Activated B cell treated with CpG ODN at 0.5 μM for 24 hours (primary cell): ENCODE measurements at regions of chr7 and their contacts with region 1.

Region 1: DNA sequence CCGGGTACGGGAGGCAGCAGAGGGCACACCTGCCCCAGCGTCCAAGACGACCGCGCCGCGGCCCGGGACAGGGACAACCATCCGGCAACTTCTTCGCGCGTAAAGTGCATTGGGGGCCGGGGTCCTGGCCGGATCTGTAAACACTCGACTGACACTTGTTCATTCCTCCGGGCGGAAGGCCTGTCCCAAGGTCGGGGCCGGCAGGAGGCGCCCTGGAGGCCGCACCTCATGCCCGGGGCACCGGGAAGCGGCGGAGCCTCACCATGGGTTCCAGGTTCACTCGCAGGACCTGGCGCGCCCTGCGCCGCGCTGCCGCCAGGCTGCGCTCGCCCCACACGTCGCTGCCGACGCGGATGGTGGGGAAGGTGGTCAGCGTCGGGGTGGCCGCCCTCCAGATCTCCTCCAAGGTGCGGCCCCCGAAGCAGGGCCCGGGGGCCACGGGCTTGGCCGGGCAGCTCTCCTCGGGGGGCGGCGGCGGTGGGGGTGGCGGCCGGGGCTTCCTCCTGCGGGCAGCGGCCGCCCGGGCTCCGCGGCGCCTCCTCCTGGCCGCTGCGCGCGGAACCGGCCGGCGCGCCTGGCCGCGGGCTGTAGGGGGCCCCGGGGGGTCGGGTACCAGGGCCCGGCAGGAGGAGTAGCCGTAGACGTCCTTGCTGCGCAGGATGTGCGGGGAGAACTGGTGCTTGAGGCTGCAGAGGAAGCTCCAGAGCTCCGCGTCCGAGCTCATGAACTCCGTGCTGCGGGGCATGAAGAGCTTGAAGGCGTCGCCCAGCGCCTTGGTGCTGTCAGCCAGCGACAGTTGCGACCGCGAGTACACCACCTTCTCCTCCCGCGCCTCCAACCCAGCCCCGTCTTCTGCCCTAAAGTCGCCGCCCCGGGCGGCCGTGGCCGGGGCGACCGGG is 746 bp downstream of the CCDC71L start:
- DNase-seq: peak; percentile 79
- ATAC-seq: peak; percentile 52
- H3K4me3 Mint-ChIP-seq: peak overlapping the region; percentile 94
- H3K27ac Mint-ChIP-seq: peak overlapping the region; percentile 90
- H3K4me1 Mint-ChIP-seq: peaks cover 34% of the 10 kb centered on the region
- H3K27me3 Mint-ChIP-seq: no peaks in the 10 kb centered on the region
- CTCF ChIP-seq: peak; percentile 84

Region 2: DNA sequence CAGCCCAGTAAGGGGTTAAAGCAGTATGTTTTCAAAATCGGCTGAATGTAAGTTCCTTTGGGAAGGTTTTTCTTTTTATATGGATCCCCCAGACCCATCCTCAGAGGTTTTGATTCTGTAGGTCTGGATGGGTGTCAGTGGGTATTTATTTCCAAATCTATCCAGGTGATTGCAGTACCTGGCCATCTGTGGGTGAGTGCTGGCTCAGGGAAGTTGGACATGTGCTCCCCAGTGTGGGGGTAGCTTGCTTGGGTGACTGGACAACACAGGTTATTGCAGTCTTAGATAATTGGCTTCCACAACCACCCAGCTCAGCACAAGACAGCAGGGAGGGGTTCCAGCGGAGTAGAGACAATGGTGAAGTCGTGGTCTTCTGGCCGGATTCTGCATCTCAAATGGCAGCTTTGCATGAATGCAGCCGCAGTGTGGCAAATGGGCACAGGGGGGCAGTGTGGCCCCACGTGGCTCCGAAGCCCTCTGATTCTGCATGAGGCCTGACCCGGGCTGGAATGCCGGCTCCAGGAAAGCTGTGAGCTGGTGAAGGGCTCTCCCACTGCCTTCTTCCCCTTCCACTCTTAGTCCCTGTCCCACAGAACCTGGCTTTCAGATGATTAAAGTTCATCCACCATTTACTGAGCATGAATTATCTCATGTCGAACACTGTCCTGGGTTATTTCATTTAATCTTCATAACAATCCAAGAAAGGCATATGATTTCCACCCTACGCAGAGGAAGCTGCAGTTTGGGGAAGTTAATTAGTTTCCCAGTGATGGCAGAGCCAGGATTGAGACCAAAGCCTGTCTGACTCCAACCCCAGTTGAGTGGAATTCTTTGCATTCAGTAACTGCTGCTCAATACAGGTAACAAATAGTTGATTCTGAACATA is 483.6 kb before region 1 on chr7:
- CTCF ChIA-PET with region 1: interaction called, 10 read pairs
- POLR2A ChIA-PET with region 1: no interaction called
- intact Hi-C with region 1: loop called (anchors 1 kb)
- DNase-seq: peak; percentile 64
- ATAC-seq: peak; percentile 91
- H3K4me3 Mint-ChIP-seq: no peak overlapping the region
- H3K27ac Mint-ChIP-seq: no peak overlapping the region
- H3K4me1 Mint-ChIP-seq: peaks cover 11% of the 10 kb centered on the region
- H3K27me3 Mint-ChIP-seq: peaks cover 4% of the 10 kb centered on the region
- CTCF ChIP-seq: peak; percentile 41

Region 3: GRCh38 chr7:106598663-106599342 is 61.4 kb before region 1 on chr7:
- CTCF ChIA-PET with region 1: interaction called, 4 read pairs
- POLR2A ChIA-PET with region 1: interaction called, 7 read pairs
- intact Hi-C with region 1: loop called (anchors 1 kb)
- DNase-seq: peak; percentile 34
- ATAC-seq: peak; percentile 100
- H3K4me3 Mint-ChIP-seq: peak overlapping the region; percentile 52
- H3K27ac Mint-ChIP-seq: peak overlapping the region; percentile 68
- H3K4me1 Mint-ChIP-seq: peaks cover 6% of the 10 kb centered on the region
- H3K27me3 Mint-ChIP-seq: no peaks in the 10 kb centered on the region
- CTCF ChIP-seq: no peak

Region 4: DNA sequence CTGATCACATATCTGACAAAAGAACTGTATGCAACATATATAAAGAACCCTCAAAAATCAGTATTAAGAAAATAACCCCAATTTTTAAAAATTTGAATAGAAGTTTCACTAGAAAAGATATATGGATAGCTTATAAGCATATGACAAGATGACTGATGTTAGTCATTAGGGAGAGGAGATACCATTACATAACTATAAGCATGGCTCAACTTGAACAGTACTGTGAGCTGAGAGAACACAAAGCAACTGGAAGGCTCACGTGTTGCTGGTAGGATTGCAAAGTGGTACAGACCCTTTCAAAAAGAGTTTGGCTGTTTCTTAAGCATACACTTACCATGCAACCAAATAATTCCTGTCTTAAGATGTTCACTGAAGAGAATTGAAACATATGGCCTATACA is 14.0 kb before region 1 on chr7:
- CTCF ChIA-PET with region 1: no interaction called
- POLR2A ChIA-PET with region 1: no interaction called
- intact Hi-C with region 1: no loop called
- DNase-seq: no peak
- ATAC-seq: no peak
- H3K4me3 Mint-ChIP-seq: no peak overlapping the region
- H3K27ac Mint-ChIP-seq: no peak overlapping the region
- H3K4me1 Mint-ChIP-seq: peaks cover 7% of the 10 kb centered on the region
- H3K27me3 Mint-ChIP-seq: no peaks in the 10 kb centered on the region
- CTCF ChIP-seq: no peak

Region 5: DNA sequence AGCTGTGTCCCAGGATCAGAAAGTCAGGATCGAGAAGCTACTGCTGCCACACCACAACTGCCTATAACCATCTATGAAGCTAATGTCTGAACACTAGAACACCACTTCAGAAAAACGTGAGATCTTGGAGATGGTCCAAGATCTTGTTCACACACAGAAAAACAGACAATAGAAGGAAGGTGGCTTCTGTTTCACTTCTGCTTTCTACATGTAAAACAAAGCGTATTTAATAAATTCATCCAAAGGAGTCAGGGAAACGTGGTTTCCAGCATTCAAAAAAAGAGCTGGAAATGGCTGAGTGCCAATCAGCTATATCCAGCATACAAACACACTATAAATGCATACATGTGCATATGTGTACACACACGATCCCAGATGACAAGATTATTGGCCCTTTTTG is 71.0 kb after region 1 on chr7:
- CTCF ChIA-PET with region 1: interaction called, 245 read pairs
- POLR2A ChIA-PET with region 1: interaction called, 72 read pairs
- intact Hi-C with region 1: loop called (anchors 1 kb)
- DNase-seq: no peak
- ATAC-seq: peak; percentile 77
- H3K4me3 Mint-ChIP-seq: peak overlapping the region; percentile 13
- H3K27ac Mint-ChIP-seq: no peak overlapping the region
- H3K4me1 Mint-ChIP-seq: peaks cover 31% of the 10 kb centered on the region
- H3K27me3 Mint-ChIP-seq: no peaks in the 10 kb centered on the region
- CTCF ChIP-seq: no peak

Region 6: GRCh38 chr7:106767498-106768323 is 107.5 kb after region 1 on chr7:
- CTCF ChIA-PET with region 1: interaction called, 6 read pairs
- POLR2A ChIA-PET with region 1: no interaction called
- intact Hi-C with region 1: loop called (anchors 1 kb)
- DNase-seq: no peak
- ATAC-seq: peak; percentile 77
- H3K4me3 Mint-ChIP-seq: peak overlapping the region; percentile 80
- H3K27ac Mint-ChIP-seq: peak overlapping the region; percentile 87
- H3K4me1 Mint-ChIP-seq: peaks cover 21% of the 10 kb centered on the region
- H3K27me3 Mint-ChIP-seq: no peaks in the 10 kb centered on the region
- CTCF ChIP-seq: no peak

Region 7: DNA sequence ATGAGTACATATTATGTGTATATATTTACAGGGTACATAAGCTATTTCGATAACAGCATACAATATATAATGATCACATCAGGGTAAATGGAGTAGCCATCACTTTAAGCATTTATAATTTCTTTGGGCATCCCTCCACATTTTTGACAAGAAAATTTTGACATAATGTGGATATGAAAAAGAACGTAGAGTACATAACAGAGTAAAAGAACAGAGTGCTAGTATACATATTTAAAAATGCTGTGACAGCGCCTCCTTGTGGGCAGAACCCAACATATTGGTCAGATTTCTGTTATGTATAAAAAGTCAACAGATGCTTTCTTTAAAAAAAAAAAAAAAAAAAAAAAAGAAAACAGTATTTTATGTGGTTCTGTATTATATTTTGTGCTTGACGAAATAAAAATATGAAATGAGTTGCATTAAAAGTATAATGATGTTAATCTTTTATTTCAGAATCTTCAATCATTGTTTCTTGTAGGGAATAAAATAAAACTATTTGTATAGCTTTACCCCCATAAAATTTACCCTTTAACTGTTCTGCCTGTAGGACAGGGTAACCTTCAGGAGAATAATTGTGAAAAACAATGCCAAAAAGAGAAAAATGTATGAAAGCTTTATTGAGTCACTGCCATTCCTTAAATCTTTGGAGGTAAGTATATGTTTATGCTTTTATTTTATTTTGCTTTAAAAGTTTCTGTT is 490.3 kb after region 1 on chr7:
- CTCF ChIA-PET with region 1: interaction called, 3 read pairs
- POLR2A ChIA-PET with region 1: no interaction called
- intact Hi-C with region 1: loop called (anchors 1 kb)
- DNase-seq: peak; percentile 34
- ATAC-seq: peak; percentile 57
- H3K4me3 Mint-ChIP-seq: no peak overlapping the region
- H3K27ac Mint-ChIP-seq: no peak overlapping the region
- H3K4me1 Mint-ChIP-seq: peaks cover 7% of the 10 kb centered on the region
- H3K27me3 Mint-ChIP-seq: no peaks in the 10 kb centered on the region
- CTCF ChIP-seq: no peak